ENCODE measurements at regions of chrX and their contacts with region 1.

Region 1: GRCh38 chrX:53422086-53422860 is at the start of gene SMC1A:
- DNase-seq: peak; percentile 98
- H3K4me3 Mint-ChIP-seq: peak within 1 kb of the TSS; percentile 76
- H3K27ac Mint-ChIP-seq: peak within 1 kb of the TSS; percentile 94
- H3K4me1 Mint-ChIP-seq: peaks cover 18% of the 10 kb centered on the region
- H3K27me3 Mint-ChIP-seq: no peaks in the 10 kb centered on the region
- CTCF ChIP-seq: no peak
- total RNA-seq, gene SMC1A: 89.6 and 94.7 TPM in 2 replicates

Region 2: DNA sequence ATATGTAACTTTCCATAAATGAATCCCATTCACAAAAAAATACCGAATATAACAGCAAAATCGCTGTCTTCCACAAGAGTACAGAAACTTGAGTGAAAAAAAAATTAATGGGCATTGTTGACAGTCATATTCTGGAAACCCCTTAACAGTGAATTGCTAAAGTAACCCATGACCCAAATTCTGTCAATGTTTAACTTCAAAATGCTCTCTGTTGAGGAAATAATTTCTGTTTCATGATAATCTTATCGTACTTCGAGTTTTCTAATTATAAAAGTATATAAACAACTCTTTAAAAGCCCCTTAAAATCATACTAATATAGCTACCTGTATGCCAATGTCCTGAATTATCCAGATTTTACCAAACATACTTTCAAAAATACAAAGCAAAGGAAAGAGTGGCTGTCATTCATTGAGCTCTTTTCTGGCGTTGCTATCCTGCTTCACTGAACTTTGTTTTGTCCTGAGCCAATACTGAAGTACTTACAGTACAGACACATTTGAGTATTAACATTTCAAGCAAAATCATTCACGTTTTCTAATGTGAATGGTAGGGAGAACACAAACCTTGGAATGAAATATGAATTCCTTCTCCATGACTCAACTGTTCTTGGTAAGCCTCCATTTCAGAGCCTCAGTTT is 556.8 kb before region 1 on chrX:
- CTCF ChIA-PET with region 1: no interaction called
- POLR2A ChIA-PET with region 1: no interaction called
- intact Hi-C with region 1: no loop called
- DNase-seq: no peak
- H3K4me3 Mint-ChIP-seq: no peak overlapping the region
- H3K27ac Mint-ChIP-seq: no peak overlapping the region
- H3K4me1 Mint-ChIP-seq: no peaks in the 10 kb centered on the region
- H3K27me3 Mint-ChIP-seq: peaks cover 94% of the 10 kb centered on the region
- CTCF ChIP-seq: no peak

Region 3: DNA sequence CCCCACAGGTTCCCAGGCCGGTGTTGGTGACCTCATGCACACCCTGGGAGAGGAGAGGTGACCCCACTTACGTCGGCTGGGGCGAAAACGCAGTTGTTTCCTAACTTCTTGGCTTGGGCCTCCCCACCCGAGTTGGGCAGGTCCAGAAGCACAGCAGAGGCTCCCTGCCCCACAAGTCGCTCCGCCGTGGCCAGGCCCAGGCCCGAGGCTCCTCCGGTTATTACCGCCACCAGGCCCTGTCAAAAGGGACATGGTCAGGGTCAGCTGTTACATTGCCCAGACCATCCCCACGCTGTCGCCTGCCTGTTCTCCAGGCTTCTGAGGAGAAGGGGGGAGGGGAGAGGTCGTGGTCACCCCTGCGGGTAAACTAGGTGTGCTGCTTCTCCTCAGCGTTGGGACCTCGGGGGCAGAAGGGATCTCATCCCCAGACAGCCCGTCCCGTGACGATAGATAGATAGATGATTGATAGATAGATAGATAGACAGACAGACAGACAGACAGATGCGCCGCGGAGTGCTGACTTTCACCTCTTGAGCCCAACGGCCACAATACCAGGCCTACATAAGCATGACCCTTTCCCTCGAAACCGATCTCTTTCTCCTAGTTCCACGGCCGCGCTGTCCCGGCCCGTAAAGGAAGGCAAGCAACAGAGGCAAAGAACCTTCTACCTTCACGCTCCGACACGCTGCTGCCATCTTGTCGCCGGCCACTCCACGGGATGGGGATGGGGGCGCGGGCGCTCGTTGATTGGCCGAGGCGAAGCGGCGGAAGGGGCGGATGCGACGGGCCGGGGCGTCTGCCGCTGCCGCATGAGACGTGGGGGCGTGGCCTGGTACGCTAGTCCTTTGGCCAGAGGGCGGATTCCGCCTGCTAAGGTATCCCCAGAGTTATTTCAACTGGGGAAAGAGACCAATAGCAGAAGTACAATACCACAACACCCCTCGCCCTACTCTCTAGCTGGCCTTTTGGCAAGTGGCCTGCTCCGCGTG is 11.7 kb after region 1 on chrX and contains the start of gene HSD17B10:
- CTCF ChIA-PET with region 1: interaction called, 11 read pairs
- POLR2A ChIA-PET with region 1: interaction called, 14 read pairs
- intact Hi-C with region 1: no loop called
- DNase-seq: peak; percentile 79
- H3K4me3 Mint-ChIP-seq: peak within 1 kb of the TSS; percentile 82
- H3K27ac Mint-ChIP-seq: peak within 1 kb of the TSS; percentile 79
- H3K4me1 Mint-ChIP-seq: peaks cover 16% of the 10 kb centered on the region
- H3K27me3 Mint-ChIP-seq: peaks cover 47% of the 10 kb centered on the region
- CTCF ChIP-seq: no peak
- total RNA-seq, gene HSD17B10: 113 and 115 TPM in 2 replicates

Region 4: DNA sequence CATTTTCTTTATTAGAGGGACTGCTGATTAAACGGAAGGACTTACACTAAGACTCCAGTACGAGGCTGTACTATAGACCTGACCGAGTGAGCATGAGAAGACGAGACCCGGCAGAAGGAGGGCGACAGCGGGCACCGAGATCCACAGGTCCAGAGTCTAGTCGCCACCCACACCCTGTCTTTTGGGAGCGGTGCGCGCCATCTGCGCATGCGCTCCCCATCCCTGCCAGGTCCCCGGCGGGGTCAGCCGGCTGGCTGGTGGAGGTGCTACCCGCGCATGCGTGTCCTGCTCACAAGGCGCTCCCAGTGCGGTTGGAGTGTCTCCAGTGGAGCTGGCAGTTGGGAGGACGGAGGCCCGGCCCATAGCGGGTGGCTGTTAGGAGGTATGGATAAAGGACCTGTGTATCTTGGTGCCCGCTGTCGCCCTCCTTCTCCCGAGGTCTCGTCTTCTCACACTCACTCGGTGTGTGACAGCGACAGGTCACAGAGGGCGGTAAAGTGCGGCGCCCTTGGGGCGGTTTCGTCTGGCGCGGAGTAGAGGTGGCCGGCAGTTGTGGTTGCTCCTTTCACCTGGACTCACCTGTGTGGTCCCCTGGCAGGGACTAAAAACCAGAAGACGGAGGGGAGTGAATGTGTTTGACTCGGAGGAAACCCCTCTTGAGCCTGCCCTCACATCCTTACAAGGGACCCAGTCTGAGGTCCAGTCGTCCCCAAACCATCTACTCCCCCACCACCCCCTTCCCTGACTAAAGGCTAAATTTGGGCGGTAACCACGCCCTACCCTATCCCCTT is 19.5 kb after region 1 on chrX:
- CTCF ChIA-PET with region 1: interaction called, 11 read pairs
- POLR2A ChIA-PET with region 1: interaction called, 15 read pairs
- intact Hi-C with region 1: no loop called
- DNase-seq: peak; percentile 82
- H3K4me3 Mint-ChIP-seq: peak overlapping the region; percentile 61
- H3K27ac Mint-ChIP-seq: peak overlapping the region; percentile 21
- H3K4me1 Mint-ChIP-seq: peaks cover 13% of the 10 kb centered on the region
- H3K27me3 Mint-ChIP-seq: peaks cover 24% of the 10 kb centered on the region
- CTCF ChIP-seq: no peak